ENCODE measurements at regions of chr12 and their contacts with region 1.

Region 1: DNA sequence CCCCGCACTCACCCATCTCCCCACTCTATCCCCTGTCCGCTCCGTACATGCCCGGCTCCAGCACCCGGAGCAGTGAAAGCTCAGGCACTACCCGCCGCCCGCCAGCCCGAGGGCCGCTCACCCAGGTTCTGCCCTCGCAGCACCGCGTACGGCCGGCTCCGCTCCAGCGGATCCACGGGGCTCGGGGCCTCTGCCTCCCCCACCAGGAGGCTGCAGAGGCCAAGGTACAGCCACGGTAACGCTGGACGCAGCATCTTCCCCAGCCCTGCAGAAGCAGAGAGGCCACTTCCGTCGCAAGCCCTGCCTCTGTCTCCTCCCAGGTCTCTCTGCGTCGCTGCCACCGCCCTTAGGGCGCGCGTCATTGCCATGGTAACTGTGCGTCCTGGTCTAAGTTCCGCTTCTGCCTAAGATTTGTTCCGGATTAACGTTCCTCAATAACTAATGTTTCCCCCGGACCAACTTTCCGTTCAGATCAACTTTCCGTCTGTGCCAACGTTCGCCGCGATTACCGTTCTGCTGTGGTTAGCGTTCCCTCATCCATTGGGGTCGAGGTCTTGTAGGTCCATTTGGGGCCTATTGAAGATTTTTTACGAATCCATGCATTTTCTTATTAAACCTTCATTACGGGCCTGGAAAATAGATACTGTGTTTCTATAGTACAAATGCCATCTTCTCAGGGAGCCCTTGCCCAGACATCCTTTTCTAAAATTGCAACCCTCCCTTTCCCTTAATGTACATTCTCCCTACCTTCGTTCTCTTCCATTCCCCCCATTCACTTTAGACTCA is at the start of gene C12orf76:
- DNase-seq: peak; percentile 67 to 92 (median 90)
- ATAC-seq: peak; percentile 100
- H3K4me3 ChIP-seq: peak within 1 kb of the TSS; percentile 81
- H3K4me3 Mint-ChIP-seq: peak within 1 kb of the TSS; percentile 84 to 97 (median 93)
- H3K27ac ChIP-seq: peak within 1 kb of the TSS; percentile 77
- H3K27ac Mint-ChIP-seq: peak within 1 kb of the TSS; percentile 90 to 99 (median 96)
- H3K4me1 ChIP-seq: peaks cover 19% of the 10 kb centered on the region in 2 donors
- H3K4me1 Mint-ChIP-seq: peaks cover 16 to 46% (median 34%) of the 10 kb centered on the region in 7 donors
- H3K27me3 ChIP-seq: no peaks in the 10 kb centered on the region
- H3K27me3 Mint-ChIP-seq: no peaks in the 10 kb centered on the region
- total RNA-seq, gene C12orf76: 14.6 to 28.7 (median 27.8) TPM

Region 2: DNA sequence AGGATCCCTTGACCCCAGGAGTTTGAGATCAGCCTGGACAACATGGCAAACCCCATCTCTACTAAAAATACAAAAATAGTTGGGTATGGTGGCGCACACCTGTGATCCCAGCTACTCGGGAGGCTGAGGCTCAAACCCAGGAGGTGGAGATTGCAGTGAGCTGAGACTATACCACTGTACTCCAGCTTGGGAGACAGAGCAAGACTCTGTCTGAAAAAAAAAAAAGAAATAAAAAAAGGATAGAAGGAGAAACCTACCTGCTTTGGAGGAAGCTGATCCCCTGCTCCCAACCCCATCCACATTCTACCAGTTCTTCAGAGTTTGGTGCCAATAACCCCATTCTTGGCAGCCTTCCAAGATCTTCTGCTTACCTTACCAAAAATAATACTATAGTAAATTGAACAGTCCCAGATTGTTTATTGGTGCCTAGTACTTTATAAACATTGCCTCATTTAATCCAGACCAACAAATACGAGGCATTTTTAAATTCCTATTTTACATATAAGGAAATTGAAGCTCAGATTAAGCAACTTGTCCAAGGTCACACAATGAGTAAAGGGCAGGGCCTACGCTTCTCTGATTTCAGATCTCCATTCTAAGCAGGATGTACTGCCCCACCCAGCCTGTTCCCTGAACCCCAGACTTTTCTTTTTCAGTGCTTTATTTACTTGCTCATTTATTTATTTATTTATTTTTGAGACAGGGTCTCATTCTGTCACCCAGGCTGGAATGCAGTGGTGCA is 368.0 kb before region 1 on chr12:
- CTCF ChIA-PET with region 1: no interaction called
- POLR2A ChIA-PET with region 1: no interaction called
- intact Hi-C with region 1: no loop called
- DNase-seq: no peak
- ATAC-seq: no peak
- H3K4me3 ChIP-seq: no peak overlapping the region
- H3K4me3 Mint-ChIP-seq: no peak overlapping the region
- H3K27ac ChIP-seq: no peak overlapping the region
- H3K27ac Mint-ChIP-seq: no peak overlapping the region
- H3K4me1 ChIP-seq: no peaks in the 10 kb centered on the region
- H3K4me1 Mint-ChIP-seq: no peaks in the 10 kb centered on the region
- H3K27me3 ChIP-seq: no peaks in the 10 kb centered on the region
- H3K27me3 Mint-ChIP-seq: peaks cover 0 to 34% (median 6%) of the 10 kb centered on the region in 5 donors

Region 3: GRCh38 chr12:109899783-109900751 is 148.4 kb before region 1 on chr12 and contains the start of gene TCHP:
- CTCF ChIA-PET with region 1: no interaction called
- POLR2A ChIA-PET with region 1: no interaction called
- intact Hi-C with region 1: loop called in 1 of 2 experiments (anchors 1 kb)
- DNase-seq: peak; percentile 58 to 79 (median 75)
- ATAC-seq: peak; percentile 97
- H3K4me3 ChIP-seq: peak within 1 kb of the TSS; percentile 90
- H3K4me3 Mint-ChIP-seq: peak within 1 kb of the TSS; percentile 88 to 98 (median 93)
- H3K27ac ChIP-seq: peak within 1 kb of the TSS; percentile 74
- H3K27ac Mint-ChIP-seq: peak within 1 kb of the TSS; percentile 88 to 99 (median 93)
- H3K4me1 ChIP-seq: peaks cover 15 to 17% of the 10 kb centered on the region in 2 donors
- H3K4me1 Mint-ChIP-seq: peaks cover 17 to 33% (median 22%) of the 10 kb centered on the region in 7 donors
- H3K27me3 ChIP-seq: no peaks in the 10 kb centered on the region
- H3K27me3 Mint-ChIP-seq: no peaks in the 10 kb centered on the region
- total RNA-seq, gene TCHP: 21.7 to 40.0 (median 31.8) TPM

Region 4: DNA sequence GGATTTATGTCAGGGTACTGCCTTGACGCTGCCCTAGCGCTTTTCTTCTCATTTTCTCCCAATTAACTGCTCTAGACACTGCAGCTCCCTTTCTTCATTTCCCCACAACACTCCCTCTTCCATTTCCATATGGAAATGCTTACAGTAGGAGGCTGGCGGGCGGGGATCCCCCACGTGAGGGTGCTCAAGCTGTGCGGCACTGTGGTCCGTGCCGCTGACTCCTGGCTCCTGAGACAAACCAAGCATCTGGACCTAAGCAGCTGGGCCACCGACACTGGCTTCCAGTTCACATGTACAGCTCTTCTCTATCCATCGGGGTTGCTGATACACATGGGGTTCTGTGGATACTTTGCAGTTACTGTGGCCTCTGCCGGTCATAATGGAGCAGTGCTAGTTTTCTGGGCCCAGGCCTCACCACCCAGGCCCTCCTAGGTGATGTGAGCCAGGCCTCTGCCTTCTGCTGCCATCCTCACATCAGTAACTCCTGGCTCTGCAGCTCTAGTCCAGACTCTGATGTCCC is 128.1 kb before region 1 on chr12:
- CTCF ChIA-PET with region 1: no interaction called
- POLR2A ChIA-PET with region 1: no interaction called
- intact Hi-C with region 1: no loop called
- DNase-seq: no peak
- ATAC-seq: no peak
- H3K4me3 ChIP-seq: no peak overlapping the region
- H3K4me3 Mint-ChIP-seq: no peak overlapping the region
- H3K27ac ChIP-seq: no peak overlapping the region
- H3K27ac Mint-ChIP-seq: peak overlapping the region in 2 of 9 donors; percentile 25 to 33
- H3K4me1 ChIP-seq: no peaks in the 10 kb centered on the region
- H3K4me1 Mint-ChIP-seq: peaks cover 0 to 4% (median 0%) of the 10 kb centered on the region in 7 donors
- H3K27me3 ChIP-seq: no peaks in the 10 kb centered on the region
- H3K27me3 Mint-ChIP-seq: no peaks in the 10 kb centered on the region

Region 5: GRCh38 chr12:110073049-110073831 is 24.8 kb after region 1 on chr12:
- CTCF ChIA-PET with region 1: no interaction called
- POLR2A ChIA-PET with region 1: no interaction called
- intact Hi-C with region 1: loop called (anchors 1 kb)
- DNase-seq: peak in 8 of 9 donors; percentile 9 to 41 (median 19)
- ATAC-seq: peak; percentile 64
- H3K4me3 ChIP-seq: peak overlapping the region; percentile 34
- H3K4me3 Mint-ChIP-seq: peak overlapping the region; percentile 82 to 95 (median 90)
- H3K27ac ChIP-seq: peak overlapping the region; percentile 51
- H3K27ac Mint-ChIP-seq: peak overlapping the region; percentile 6 to 94 (median 85)
- H3K4me1 ChIP-seq: no peaks in the 10 kb centered on the region
- H3K4me1 Mint-ChIP-seq: peaks cover 18 to 61% (median 35%) of the 10 kb centered on the region in 7 donors
- H3K27me3 ChIP-seq: no peaks in the 10 kb centered on the region
- H3K27me3 Mint-ChIP-seq: no peaks in the 10 kb centered on the region

Region 6: DNA sequence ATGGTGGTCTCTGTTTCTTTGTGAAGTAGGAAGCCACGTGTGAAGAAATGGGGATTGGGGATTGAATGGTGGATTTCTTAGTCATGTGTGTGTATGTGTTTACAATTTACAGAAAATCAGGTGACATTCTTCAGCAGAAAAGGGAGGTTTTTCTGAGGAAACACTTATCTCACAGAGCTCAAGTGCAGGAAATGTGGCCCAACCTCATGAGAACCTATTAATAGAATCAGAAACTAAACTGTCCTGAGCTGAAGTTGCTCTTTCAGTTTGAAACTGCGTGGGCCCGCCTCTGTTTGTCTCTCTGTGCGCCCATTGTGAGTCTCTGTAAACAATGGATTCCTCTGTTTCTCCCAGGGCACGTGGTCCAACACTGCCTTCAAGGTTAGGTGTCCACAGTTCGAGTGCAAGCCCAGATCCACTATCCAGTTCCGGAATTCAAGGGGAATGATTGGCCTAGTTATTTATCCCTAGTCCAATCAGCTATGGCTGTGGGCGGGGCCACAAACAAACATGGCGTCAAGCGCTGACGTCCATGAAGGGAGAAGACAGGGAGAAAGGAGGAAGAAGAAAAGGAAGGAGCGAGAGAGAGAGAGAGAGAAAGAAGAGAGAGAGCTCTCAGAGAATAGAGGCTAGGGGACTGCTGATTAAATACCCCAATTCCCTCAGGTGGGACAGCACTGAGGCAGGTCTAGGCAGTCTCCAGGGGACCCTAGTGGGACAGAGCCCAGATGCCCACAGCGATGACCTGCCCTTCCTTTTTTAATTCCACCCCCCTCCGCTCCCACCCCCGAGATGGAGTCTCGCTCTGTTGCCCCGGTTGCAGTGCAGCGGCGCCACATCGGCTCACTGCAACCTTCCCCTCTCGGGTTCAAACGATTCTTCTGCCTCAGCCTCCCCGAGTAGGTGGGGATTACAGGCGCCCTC is 31.3 kb after region 1 on chr12:
- CTCF ChIA-PET with region 1: no interaction called
- POLR2A ChIA-PET with region 1: no interaction called
- intact Hi-C with region 1: loop called (anchors 1 kb)
- DNase-seq: peak; percentile 44 to 83 (median 75)
- ATAC-seq: peak; percentile 96
- H3K4me3 ChIP-seq: peak overlapping the region; percentile 42
- H3K4me3 Mint-ChIP-seq: peak overlapping the region; percentile 76 to 94 (median 86)
- H3K27ac ChIP-seq: peak overlapping the region; percentile 71
- H3K27ac Mint-ChIP-seq: peak overlapping the region; percentile 92 to 99 (median 98)
- H3K4me1 ChIP-seq: peaks cover 9 to 21% of the 10 kb centered on the region in 2 donors
- H3K4me1 Mint-ChIP-seq: peaks cover 13 to 47% (median 26%) of the 10 kb centered on the region in 7 donors
- H3K27me3 ChIP-seq: no peaks in the 10 kb centered on the region
- H3K27me3 Mint-ChIP-seq: peaks cover 0 to 5% (median 0%) of the 10 kb centered on the region in 5 donors

Region 7: DNA sequence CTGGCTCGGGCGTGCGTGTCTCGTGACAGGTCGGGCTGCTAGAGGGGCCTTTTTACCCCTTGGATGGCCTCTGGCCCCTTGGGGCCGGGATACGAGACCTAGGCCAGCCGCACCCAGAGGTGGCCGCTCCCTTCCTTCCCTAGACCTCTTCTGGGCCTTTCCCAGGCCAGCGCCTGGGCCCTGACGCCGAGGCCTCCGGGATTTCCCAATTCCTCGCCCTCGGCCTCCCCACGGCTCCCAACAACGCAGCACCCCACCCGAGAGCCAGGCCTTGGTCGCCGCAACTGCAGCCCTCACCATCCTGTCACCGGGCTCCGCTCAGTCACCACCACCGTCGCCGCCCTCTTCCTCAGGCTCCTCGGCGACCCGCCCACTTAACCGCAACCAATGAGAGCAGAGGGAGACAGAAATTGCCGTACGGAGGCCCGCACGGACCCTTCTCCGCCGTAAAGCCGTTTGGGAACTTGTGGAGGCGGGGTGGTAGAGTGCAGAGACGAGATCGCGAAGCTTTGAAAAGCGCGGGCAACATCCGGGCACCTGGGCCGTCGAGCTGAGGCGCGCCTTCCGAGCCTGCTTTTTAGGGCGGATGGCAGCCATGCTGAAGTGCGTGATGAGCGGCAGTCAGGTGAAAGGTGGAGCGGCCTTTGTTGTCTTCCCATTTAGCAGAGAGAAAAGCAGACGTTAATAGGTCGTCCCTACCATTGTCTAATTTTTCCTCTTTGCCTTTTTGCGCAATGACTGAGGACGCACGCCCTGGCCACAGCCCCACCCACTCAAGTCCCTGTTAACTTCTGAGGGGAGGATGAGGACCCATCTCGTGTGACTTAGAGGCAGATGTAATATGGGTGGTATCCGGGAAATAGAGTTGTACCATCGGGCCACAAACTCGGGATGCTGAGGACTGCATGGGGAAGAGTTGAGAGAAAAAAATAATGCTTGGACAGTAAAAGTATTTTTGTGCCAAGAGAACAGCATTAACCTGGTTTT is 453.6 kb after region 1 on chr12 and contains the starts of genes RAD9B and VPS29:
- CTCF ChIA-PET with region 1: no interaction called
- POLR2A ChIA-PET with region 1: no interaction called
- intact Hi-C with region 1: loop called in 1 of 2 experiments (anchors 1 kb)
- DNase-seq: peak; percentile 91 to 100 (median 99)
- ATAC-seq: peak; percentile 98
- H3K4me3 ChIP-seq: peak within 1 kb of the TSS; percentile 86
- H3K4me3 Mint-ChIP-seq: peak within 1 kb of the TSS; percentile 88 to 100 (median 97)
- H3K27ac ChIP-seq: peak within 1 kb of the TSS; percentile 89
- H3K27ac Mint-ChIP-seq: peak within 1 kb of the TSS; percentile 93 to 100 (median 97)
- H3K4me1 ChIP-seq: peaks cover 20 to 22% of the 10 kb centered on the region in 2 donors
- H3K4me1 Mint-ChIP-seq: peaks cover 22 to 52% (median 39%) of the 10 kb centered on the region in 7 donors
- H3K27me3 ChIP-seq: no peaks in the 10 kb centered on the region
- H3K27me3 Mint-ChIP-seq: peaks cover 0 to 3% (median 0%) of the 10 kb centered on the region in 5 donors
- total RNA-seq, gene RAD9B: 0.60 to 2.9 (median 1.1) TPM
- total RNA-seq, gene VPS29: 78.5 to 131 (median 115) TPM

Region 8: DNA sequence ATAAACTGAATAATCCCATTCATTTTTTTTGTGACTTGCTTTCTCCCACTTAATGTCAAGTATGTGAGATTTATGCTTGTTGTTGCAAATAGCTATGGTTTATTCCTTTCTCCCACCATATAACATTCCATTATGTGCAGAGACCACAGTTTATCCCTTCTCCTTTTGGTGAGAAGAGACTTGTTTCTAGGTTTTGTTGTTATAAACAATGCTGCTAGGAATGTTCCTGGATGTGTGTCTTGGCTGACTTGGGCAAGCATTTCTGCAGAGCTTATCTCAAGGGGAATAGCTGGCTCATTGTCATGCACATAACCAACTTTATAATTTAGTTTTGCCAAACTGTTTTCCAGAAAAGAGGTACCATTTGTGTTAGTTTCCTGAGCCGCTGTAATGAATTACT is 741.9 kb after region 1 on chr12:
- CTCF ChIA-PET with region 1: no interaction called
- POLR2A ChIA-PET with region 1: no interaction called
- intact Hi-C with region 1: no loop called
- DNase-seq: no peak
- ATAC-seq: no peak
- H3K4me3 ChIP-seq: no peak overlapping the region
- H3K4me3 Mint-ChIP-seq: no peak overlapping the region
- H3K27ac ChIP-seq: no peak overlapping the region
- H3K27ac Mint-ChIP-seq: no peak overlapping the region
- H3K4me1 ChIP-seq: no peaks in the 10 kb centered on the region
- H3K4me1 Mint-ChIP-seq: peaks cover 0 to 9% (median 4%) of the 10 kb centered on the region in 7 donors
- H3K27me3 ChIP-seq: no peaks in the 10 kb centered on the region
- H3K27me3 Mint-ChIP-seq: no peaks in the 10 kb centered on the region